ENCODE measurements at regions of chr10 and their contacts with region 1.

Region 1: GRCh38 chr10:119445311-119445934 is 97.1 kb downstream of the RGS10 start:
- DNase-seq: peak; percentile 56 to 95
- H3K4me3 ChIP-seq: no peak overlapping the region
- H3K27ac ChIP-seq: no peak overlapping the region
- H3K4me1 ChIP-seq: peaks cover 0 to 4% (median 0%) of the 10 kb centered on the region in 4 experiments; a peak in 3 of 7 replicates
- H3K27me3 ChIP-seq: no peaks in the 10 kb centered on the region
- CTCF ChIP-seq: peak; percentile 92 to 97 (median 93)
- EP300 ChIP-seq: no peak
- POLR2A ChIP-seq: no peak
- RAD21 ChIP-seq: peak; percentile 83 to 85

Region 2: DNA sequence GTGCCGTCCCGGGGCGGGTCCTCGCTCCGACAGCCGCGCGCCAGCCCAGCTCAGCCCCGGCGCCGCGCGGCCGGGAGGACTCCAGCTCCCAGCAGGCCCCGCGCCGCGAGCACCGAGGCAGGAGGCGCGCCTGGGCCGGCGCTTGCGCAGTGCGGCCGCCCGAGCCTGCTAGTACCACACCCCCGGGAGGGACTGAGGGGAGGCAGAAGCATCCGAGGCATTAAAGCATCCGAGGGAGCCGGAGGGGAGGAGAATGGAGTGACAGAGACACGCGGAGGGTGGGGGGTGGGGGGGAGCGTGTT is 238.1 kb before region 1 on chr10 and contains the start of gene GRK5:
- CTCF ChIA-PET with region 1: interaction called, 25 read pairs
- POLR2A ChIA-PET with region 1: interaction called, 3 read pairs
- DNase-seq: peak; percentile 80 to 89
- H3K4me3 ChIP-seq: peak within 1 kb of the TSS; percentile 51 to 79 (median 62)
- H3K27ac ChIP-seq: peak within 1 kb of the TSS; percentile 41; the same call in 1 of the 2 replicates
- H3K4me1 ChIP-seq: peaks cover 3 to 8% (median 6%) of the 10 kb centered on the region in 4 experiments
- H3K27me3 ChIP-seq: peaks cover 5 to 17% (median 14%) of the 10 kb centered on the region in 4 experiments
- CTCF ChIP-seq: no peak
- EP300 ChIP-seq: no peak
- POLR2A ChIP-seq: no peak; a peak in 1 of 3 replicates
- RAD21 ChIP-seq: no peak
- total RNA-seq, gene GRK5: 2.4 and 2.5 TPM in 2 replicates

Region 3: DNA sequence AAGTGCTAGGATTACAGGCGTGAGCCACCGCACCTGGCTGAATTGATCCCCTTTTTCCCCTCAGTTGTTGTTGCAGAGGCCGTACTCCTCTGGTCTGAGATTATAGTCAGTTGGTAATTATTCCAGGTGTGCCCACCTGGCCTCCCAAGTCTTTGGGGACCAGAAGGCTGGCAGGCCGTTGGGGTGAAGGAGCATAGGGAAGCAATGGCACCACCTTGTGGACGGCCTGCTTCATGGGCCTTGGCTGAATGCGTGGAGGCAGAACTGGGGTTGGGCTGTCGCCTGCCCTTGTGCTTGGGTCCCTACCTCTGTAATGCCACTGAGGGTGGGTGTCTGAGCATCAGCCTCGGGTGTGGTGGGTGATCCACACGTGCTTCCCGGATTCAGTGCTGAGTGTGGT is 28.6 kb before region 1 on chr10:
- CTCF ChIA-PET with region 1: interaction called, 29 read pairs
- POLR2A ChIA-PET with region 1: no interaction called
- DNase-seq: peak; percentile 36 to 82
- H3K4me3 ChIP-seq: no peak overlapping the region
- H3K27ac ChIP-seq: no peak overlapping the region
- H3K4me1 ChIP-seq: peaks cover 0 to 8% (median 4%) of the 10 kb centered on the region in 4 experiments; a peak in 6 of 7 replicates
- H3K27me3 ChIP-seq: no peaks in the 10 kb centered on the region
- CTCF ChIP-seq: peak; percentile 95 to 98 (median 97)
- EP300 ChIP-seq: no peak
- POLR2A ChIP-seq: no peak
- RAD21 ChIP-seq: peak; percentile 94 to 98

Region 4: DNA sequence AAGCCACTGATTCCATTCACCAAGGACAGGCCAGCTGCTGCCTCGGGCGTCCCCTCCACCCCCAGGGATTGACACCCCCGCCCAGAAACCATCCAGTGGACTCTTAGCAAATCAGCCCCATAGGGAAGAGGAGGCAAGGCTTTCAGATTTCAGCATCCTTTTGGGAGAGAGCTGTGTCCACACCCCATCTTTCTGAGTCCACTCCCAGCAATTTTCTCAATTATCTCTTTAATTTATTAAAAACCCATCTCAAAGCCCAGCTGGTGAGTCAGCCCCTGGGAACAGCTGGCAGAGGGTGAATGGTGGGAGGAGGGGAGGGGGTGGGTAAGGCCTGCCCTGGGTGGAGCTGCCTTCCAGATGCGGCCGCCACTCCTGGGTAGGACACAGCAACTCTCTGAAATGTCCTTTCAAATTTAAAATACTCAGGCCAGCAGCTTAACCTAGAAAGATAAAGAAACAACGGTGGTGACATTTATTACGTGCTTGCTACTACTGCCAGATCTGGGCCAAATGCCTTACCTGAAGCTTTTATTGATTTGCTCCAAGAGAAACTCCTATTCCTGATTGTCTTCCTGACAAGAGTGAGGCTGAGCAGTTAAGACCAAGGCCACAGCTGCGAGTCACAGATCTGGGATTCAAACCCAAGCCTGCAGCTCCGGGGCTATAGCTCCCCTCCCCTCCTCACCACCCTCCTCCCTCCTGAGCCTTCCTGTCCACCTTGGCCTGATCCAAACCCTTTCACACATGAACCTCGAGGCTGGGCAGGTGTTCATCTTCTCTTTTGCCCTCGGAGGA is 23.3 kb before region 1 on chr10:
- CTCF ChIA-PET with region 1: interaction called, 29 read pairs
- POLR2A ChIA-PET with region 1: no interaction called
- DNase-seq: no peak
- H3K4me3 ChIP-seq: no peak overlapping the region
- H3K27ac ChIP-seq: no peak overlapping the region
- H3K4me1 ChIP-seq: peaks cover 0 to 11% (median 7%) of the 10 kb centered on the region in 4 experiments; a peak in 6 of 7 replicates
- H3K27me3 ChIP-seq: no peaks in the 10 kb centered on the region
- CTCF ChIP-seq: no peak
- EP300 ChIP-seq: no peak
- POLR2A ChIP-seq: no peak
- RAD21 ChIP-seq: no peak

Region 5: GRCh38 chr10:119431034-119431767 is 14.2 kb before region 1 on chr10:
- CTCF ChIA-PET with region 1: interaction called, 26 read pairs
- POLR2A ChIA-PET with region 1: interaction called, 3 read pairs
- DNase-seq: no peak
- H3K4me3 ChIP-seq: no peak overlapping the region
- H3K27ac ChIP-seq: no peak overlapping the region
- H3K4me1 ChIP-seq: no peaks in the 10 kb centered on the region
- H3K27me3 ChIP-seq: no peaks in the 10 kb centered on the region
- CTCF ChIP-seq: no peak
- EP300 ChIP-seq: no peak
- POLR2A ChIP-seq: no peak
- RAD21 ChIP-seq: no peak

Region 6: GRCh38 chr10:119457966-119458766 is 12.7 kb after region 1 on chr10:
- CTCF ChIA-PET with region 1: interaction called, 39 read pairs
- POLR2A ChIA-PET with region 1: no interaction called
- DNase-seq: no peak
- H3K4me3 ChIP-seq: no peak overlapping the region
- H3K27ac ChIP-seq: no peak overlapping the region
- H3K4me1 ChIP-seq: peaks cover 0 to 5% (median 0%) of the 10 kb centered on the region in 4 experiments; a peak in 2 of 7 replicates
- H3K27me3 ChIP-seq: peaks cover 0 to 9% (median 3%) of the 10 kb centered on the region in 4 experiments; a peak in 4 of 7 replicates
- CTCF ChIP-seq: peak in 1 of 3 experiments; percentile 21; a peak in 1 of 4 replicates
- EP300 ChIP-seq: no peak
- POLR2A ChIP-seq: no peak
- RAD21 ChIP-seq: no peak

Region 7: GRCh38 chr10:119494236-119495060 is 49.0 kb after region 1 on chr10:
- CTCF ChIA-PET with region 1: interaction called, 21 read pairs
- POLR2A ChIA-PET with region 1: no interaction called
- DNase-seq: no peak
- H3K4me3 ChIP-seq: no peak overlapping the region
- H3K27ac ChIP-seq: no peak overlapping the region
- H3K4me1 ChIP-seq: peaks cover 0 to 4% (median 0%) of the 10 kb centered on the region in 4 experiments; a peak in 3 of 7 replicates
- H3K27me3 ChIP-seq: no peaks in the 10 kb centered on the region; a peak in 2 of 7 replicates
- CTCF ChIP-seq: no peak
- EP300 ChIP-seq: no peak
- POLR2A ChIP-seq: no peak
- RAD21 ChIP-seq: no peak

Measured in H1 (cell line).